Activated CD8-positive, alpha-beta T cell treated with anti-CD3 and anti-CD28 coated beads, Interleukin-2, amount 10 ng/mL, durations not matched to agents 7 days and 5 days (primary cell): ENCODE measurements at regions of chr7 and their contacts with region 1.

Region 1: DNA sequence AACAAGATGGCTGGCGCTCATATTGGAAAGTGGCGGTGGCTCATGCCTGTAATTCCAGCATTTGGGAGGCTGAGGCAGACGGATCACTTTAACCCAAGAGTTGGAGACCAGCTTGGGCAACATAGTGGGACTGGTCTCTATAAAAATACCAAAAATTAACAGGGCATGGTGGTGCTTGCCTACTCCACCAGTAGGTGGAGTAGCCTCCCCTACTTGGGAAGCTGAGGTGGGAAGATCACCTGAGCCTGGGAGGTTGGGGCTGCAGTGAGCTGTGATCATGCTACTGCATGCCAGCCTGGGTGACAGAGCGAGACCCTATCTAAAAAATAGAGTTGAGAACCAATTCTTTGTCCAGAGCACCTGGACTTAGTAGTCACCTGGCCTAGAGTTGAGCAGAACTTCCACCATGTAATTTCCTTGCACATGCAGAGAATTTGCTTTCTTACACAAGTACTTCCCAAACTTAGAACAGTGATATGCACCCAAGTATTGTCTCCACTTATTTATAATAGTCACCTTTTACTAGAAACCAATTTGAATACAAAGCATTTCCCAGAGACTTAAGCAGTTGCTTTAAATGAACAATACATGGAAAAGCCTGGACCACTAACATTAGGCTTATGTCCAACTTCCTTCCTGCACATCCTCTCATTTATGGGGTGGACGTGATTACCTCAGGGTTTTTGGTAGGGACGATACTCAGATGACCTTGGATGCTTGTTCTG is 15.9 kb downstream of the LAMB4 start:
- DNase-seq: peak; percentile 45
- ATAC-seq: peak; percentile 58
- H3K4me3 Mint-ChIP-seq: no peak overlapping the region
- H3K27ac Mint-ChIP-seq: no peak overlapping the region
- H3K4me1 Mint-ChIP-seq: peaks cover under 1% of the 10 kb centered on the region
- H3K27me3 Mint-ChIP-seq: peaks cover 1% of the 10 kb centered on the region

Region 2: DNA sequence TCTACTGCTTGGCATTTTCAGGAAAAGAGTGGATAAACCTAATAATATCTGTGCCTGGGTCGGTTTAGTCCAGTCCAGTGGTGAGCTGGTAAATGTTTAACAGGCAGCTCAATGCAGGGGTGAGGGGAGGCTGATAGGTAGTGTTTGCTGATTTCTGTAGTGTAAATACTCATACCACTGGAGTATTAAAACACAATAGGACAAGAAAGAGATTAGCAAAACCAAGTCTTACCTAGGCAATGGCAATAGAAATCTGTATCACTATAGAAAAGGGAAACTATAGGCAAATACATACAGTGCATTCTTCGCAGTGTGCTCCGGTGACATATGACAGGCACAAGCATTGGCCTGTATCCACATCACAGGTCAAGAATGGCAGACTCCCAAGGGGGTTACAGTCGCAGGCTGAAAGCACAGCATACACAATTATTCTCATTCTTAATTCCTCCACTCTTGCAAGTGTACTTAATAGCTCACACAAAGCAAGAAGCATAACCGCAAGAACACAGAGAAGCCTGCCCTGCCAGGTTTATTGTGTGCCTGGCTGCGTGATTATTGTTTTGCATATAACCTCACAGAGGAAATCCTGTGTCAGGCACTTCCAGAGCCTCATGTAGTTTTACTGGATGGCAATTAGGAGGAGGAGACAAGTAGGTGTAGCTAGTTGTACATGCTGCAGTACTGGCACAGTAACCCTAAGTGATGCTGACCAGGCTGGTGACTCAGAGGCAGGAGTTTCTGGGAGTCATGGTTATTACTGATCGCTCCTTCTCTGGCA is 19.2 kb before region 1 on chr7:
- CTCF ChIA-PET with region 1: no interaction called
- POLR2A ChIA-PET with region 1: no interaction called
- DNase-seq: no peak
- ATAC-seq: no peak
- H3K4me3 Mint-ChIP-seq: no peak overlapping the region
- H3K27ac Mint-ChIP-seq: no peak overlapping the region
- H3K4me1 Mint-ChIP-seq: no peaks in the 10 kb centered on the region
- H3K27me3 Mint-ChIP-seq: peaks cover 9% of the 10 kb centered on the region

Region 3: DNA sequence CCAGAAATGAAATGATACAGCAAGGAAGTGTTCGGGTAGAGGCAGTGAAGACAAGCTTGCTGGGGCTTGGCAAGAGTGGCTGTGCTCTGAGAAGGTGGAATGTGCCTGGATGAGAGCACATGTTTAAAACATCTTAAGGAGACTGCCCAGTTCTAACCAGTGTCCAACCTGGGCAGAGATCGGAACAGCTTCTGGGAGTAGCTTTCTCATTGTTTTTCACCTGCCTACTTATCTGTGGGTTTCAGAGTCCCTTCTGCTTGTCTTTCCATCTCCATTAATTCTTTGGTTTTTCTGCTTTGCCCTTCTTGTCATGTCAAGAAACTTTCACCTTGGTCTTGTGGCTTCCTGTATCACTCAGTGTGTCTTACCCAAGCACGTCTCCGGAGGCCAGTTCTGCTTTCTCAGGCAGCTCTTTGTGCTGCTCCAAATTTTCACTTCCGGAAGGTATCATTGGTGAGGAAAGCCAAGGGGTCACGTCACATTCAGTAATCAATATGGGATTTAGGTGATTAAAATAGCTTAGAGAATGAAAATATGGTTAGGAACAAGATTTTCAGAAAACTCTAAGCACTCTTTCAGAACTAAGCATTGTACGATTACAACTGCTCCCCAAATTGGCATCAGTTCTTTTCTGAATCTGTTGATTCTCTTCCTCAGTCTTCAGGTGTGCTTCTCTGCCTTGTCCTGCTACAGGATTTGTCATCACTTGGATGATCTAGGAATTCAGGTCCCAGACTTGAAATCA is 21.3 kb after region 1 on chr7:
- CTCF ChIA-PET with region 1: interaction called, 25 read pairs
- POLR2A ChIA-PET with region 1: no interaction called
- DNase-seq: peak; percentile 70
- ATAC-seq: peak; percentile 96
- H3K4me3 Mint-ChIP-seq: peak overlapping the region; percentile 12
- H3K27ac Mint-ChIP-seq: peak overlapping the region; percentile 86
- H3K4me1 Mint-ChIP-seq: peaks cover 39% of the 10 kb centered on the region
- H3K27me3 Mint-ChIP-seq: no peaks in the 10 kb centered on the region

Region 4: GRCh38 chr7:108146070-108146837 is 32.0 kb after region 1 on chr7:
- CTCF ChIA-PET with region 1: interaction called, 60 read pairs
- POLR2A ChIA-PET with region 1: no interaction called
- DNase-seq: peak; percentile 72
- ATAC-seq: peak; percentile 70
- H3K4me3 Mint-ChIP-seq: no peak overlapping the region
- H3K27ac Mint-ChIP-seq: no peak overlapping the region
- H3K4me1 Mint-ChIP-seq: peaks cover 4% of the 10 kb centered on the region
- H3K27me3 Mint-ChIP-seq: no peaks in the 10 kb centered on the region

Region 5: DNA sequence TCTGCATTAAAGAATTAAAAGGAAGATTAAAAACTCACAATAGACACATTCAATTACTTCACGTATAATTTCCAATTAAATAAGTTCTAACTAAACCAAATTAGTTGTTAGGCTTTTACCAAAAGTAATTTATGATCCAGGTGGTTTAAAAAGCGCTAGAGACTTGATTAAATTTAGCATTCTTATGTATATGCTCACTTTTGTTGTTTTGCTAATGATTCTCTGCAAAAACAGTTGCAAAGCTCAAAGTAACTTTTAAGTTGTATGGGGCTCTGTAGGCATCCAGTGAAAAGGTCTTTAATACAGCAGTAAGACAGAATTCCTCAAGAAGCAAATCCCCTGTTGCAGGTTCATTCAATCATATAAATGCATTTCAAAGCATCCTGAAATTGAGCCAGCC is 427.2 kb after region 1 on chr7:
- CTCF ChIA-PET with region 1: no interaction called
- POLR2A ChIA-PET with region 1: no interaction called
- DNase-seq: no peak
- ATAC-seq: no peak
- H3K4me3 Mint-ChIP-seq: no peak overlapping the region
- H3K27ac Mint-ChIP-seq: no peak overlapping the region
- H3K4me1 Mint-ChIP-seq: no peaks in the 10 kb centered on the region
- H3K27me3 Mint-ChIP-seq: peaks cover 6% of the 10 kb centered on the region